ENCODE measurements at regions of chr1 and their contacts with region 1.

Region 1: DNA sequence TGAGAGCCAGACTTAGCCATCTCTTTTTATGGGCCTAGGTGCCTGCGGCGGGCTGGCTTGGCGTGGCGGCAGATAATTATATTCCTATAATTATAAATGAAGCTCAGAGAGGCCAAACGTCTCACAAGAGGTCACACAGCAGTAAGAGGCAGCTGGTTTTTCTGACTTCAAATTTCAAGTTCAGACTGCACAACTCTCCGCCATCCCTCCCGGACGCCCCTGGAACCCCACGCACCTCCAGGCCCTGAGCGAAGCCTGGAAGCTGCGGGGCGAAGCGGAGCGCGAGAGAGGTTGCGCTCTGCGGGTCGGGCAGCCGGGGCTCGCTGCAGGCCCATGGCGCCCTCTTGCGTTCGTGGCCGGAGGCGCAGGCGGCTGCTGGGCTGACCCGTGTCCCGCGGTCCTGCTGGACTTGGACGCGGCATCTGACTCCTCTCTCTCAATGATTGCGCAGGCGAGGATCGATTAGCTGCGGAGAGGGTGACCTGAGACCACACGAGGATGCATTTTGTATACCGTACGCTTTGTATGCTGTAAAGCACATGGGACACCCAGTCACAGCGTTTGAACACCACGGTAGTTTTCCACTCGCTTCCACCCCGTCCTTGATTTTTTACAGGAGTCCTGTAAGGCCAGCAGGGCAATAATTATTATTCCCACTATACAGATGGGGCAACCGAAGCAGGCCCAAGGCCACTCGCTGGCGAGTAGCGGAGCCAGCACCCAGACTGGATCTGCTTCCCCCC is 272.7 kb downstream of the FOXD2 start:
- DNase-seq: peak; percentile 88
- H3K4me3 Mint-ChIP-seq: peak overlapping the region; percentile 83
- H3K27ac Mint-ChIP-seq: no peak overlapping the region
- H3K4me1 Mint-ChIP-seq: no peaks in the 10 kb centered on the region
- H3K27me3 Mint-ChIP-seq: peaks cover 61% of the 10 kb centered on the region
- CTCF ChIP-seq: peak; percentile 95

Region 2: GRCh38 chr1:47388891-47389238 is 321.6 kb before region 1 on chr1:
- CTCF ChIA-PET with region 1: no interaction called
- intact Hi-C with region 1: loop called (anchors 5 kb)
- DNase-seq: peak; percentile 81
- H3K4me3 Mint-ChIP-seq: no peak overlapping the region
- H3K27ac Mint-ChIP-seq: no peak overlapping the region
- H3K4me1 Mint-ChIP-seq: no peaks in the 10 kb centered on the region
- H3K27me3 Mint-ChIP-seq: peaks cover 22% of the 10 kb centered on the region
- CTCF ChIP-seq: peak; percentile 88

Region 3: DNA sequence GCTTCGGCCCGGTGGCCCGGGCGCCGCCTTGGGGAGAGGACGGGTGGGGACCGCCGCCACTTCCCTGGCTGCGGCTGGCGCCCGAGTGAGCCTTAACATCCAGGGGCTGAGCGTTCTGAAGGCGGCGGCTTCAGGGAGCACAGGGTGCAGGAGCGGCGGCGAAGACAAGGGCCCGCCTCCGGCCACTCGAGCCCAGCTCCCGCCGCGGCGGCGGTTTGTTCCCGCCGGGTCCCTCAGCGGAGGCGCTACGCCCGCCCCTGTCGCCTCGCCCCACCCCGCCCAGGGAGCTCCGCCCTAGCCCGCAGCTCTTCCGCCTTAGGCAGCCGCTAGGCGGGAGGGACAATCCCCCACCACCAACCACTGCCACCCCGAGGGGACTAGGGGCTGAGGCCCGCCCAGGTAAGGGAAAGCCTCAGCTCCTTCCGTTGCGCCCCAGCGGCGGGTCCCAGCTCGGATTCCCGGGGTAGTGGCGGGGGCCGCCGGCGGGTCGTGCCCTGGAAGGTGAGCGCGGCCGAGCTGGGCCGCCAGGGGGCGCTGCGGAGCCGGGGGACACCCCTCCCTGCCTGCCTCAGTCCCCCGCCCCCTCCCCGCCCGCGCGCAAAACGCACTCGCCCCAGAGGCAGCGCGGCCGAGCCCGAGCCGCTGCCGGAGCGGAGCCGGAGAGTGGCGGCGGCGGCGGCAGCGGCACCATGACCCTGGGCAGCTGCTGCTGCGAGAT is 272.9 kb before region 1 on chr1 and contains the start of gene FOXD2:
- CTCF ChIA-PET with region 1: interaction called, 21 read pairs
- intact Hi-C with region 1: loop called (anchors 2 kb)
- DNase-seq: peak; percentile 97
- H3K4me3 Mint-ChIP-seq: peak within 1 kb of the TSS; percentile 87
- H3K27ac Mint-ChIP-seq: peak within 1 kb of the TSS; percentile 48
- H3K4me1 Mint-ChIP-seq: peaks cover 15% of the 10 kb centered on the region
- H3K27me3 Mint-ChIP-seq: no peaks in the 10 kb centered on the region
- CTCF ChIP-seq: peak; percentile 99
- total RNA-seq, gene FOXD2: 0.68 and 0.78 TPM in 2 replicates

Region 4: GRCh38 chr1:47527658-47528255 is 182.7 kb before region 1 on chr1:
- CTCF ChIA-PET with region 1: interaction called, 16 read pairs
- intact Hi-C with region 1: loop called (anchors 1 kb)
- DNase-seq: peak; percentile 79
- H3K4me3 Mint-ChIP-seq: no peak overlapping the region
- H3K27ac Mint-ChIP-seq: no peak overlapping the region
- H3K4me1 Mint-ChIP-seq: peaks cover 15% of the 10 kb centered on the region
- H3K27me3 Mint-ChIP-seq: peaks cover 33% of the 10 kb centered on the region
- CTCF ChIP-seq: peak; percentile 80

Region 5: GRCh38 chr1:47532921-47533792 is 177.3 kb before region 1 on chr1:
- CTCF ChIA-PET with region 1: interaction called, 16 read pairs
- intact Hi-C with region 1: no loop called
- DNase-seq: no peak
- H3K4me3 Mint-ChIP-seq: peak overlapping the region; percentile 21
- H3K27ac Mint-ChIP-seq: no peak overlapping the region
- H3K4me1 Mint-ChIP-seq: peaks cover under 1% of the 10 kb centered on the region
- H3K27me3 Mint-ChIP-seq: peaks cover 34% of the 10 kb centered on the region
- CTCF ChIP-seq: no peak

Region 6: GRCh38 chr1:47650197-47650596 is 60.3 kb before region 1 on chr1:
- CTCF ChIA-PET with region 1: no interaction called
- intact Hi-C with region 1: loop called (anchors 5 kb)
- DNase-seq: peak; percentile 87
- H3K4me3 Mint-ChIP-seq: no peak overlapping the region
- H3K27ac Mint-ChIP-seq: peak overlapping the region; percentile 88
- H3K4me1 Mint-ChIP-seq: peaks cover 41% of the 10 kb centered on the region
- H3K27me3 Mint-ChIP-seq: peaks cover 10% of the 10 kb centered on the region
- CTCF ChIP-seq: no peak

Region 7: GRCh38 chr1:47725992-47726855 is 15.7 kb after region 1 on chr1:
- CTCF ChIA-PET with region 1: interaction called, 13 read pairs
- intact Hi-C with region 1: no loop called
- DNase-seq: peak; percentile 85
- H3K4me3 Mint-ChIP-seq: peak overlapping the region; percentile 55
- H3K27ac Mint-ChIP-seq: no peak overlapping the region
- H3K4me1 Mint-ChIP-seq: peaks cover 26% of the 10 kb centered on the region
- H3K27me3 Mint-ChIP-seq: peaks cover 42% of the 10 kb centered on the region
- CTCF ChIP-seq: peak; percentile 72

Region 8: DNA sequence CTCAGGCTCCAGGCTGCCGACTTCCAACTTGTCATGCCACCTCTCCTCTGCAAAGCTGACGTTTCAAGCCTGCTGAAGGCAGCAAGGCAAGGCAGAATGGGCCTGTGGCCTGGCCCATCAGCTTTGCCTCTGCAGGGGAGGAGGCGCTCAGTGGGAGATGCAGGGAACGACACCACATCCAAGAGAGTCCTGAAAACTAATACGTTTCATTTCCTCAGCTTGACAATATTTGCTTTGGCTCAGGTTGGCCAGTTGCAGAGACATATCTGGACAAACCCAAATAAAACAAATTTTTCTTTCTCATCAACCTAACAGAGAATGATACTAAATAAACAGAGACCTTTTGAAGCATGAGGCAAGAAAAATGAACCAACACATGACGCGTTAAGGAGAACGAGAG is 1030.9 kb after region 1 on chr1:
- CTCF ChIA-PET with region 1: no interaction called
- intact Hi-C with region 1: no loop called
- DNase-seq: no peak
- H3K4me3 Mint-ChIP-seq: no peak overlapping the region
- H3K27ac Mint-ChIP-seq: no peak overlapping the region
- H3K4me1 Mint-ChIP-seq: no peaks in the 10 kb centered on the region
- H3K27me3 Mint-ChIP-seq: peaks cover 5% of the 10 kb centered on the region
- CTCF ChIP-seq: no peak

Measured in Calu3 (cell line).